Breast epithelium (tissue), 4 donors: ENCODE measurements at regions of chr3 and their contacts with region 1.

Region 1: DNA sequence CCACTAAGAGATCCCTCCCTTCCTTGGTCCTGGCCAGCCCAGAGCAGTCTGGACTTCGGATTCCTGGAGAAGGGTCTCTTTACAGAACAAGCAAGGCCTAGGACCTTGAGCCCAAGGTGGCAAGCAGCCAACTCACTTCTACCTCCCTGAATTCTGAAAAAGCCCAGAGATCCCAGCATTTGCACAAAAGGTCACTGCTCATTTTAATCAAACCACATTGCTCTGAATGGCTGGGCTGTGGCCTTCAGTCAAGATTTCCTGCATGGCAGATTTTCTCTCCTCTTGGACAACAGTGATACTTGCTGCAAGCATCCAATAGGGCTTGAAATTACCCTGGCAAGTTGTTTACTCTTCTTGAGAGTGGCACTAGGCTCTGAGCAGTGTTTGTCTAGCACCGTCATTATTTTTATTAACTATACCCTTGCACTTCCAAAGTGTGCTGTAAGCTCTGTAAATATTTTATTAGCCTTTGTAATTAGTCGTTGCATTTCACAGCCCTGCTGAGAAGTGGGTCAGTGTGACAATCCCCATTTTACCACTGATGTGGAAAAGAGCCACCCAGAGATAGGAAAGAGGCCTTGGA is 274.7 kb upstream of the CTNNB1 start:
- DNase-seq: no peak
- H3K4me3 ChIP-seq: no peak overlapping the region
- H3K27ac ChIP-seq: no peak overlapping the region
- H3K4me1 ChIP-seq: no peaks in the 10 kb centered on the region
- H3K27me3 ChIP-seq: no peaks in the 10 kb centered on the region
- CTCF ChIP-seq: no peak
- POLR2A ChIP-seq: no peak

Region 2: DNA sequence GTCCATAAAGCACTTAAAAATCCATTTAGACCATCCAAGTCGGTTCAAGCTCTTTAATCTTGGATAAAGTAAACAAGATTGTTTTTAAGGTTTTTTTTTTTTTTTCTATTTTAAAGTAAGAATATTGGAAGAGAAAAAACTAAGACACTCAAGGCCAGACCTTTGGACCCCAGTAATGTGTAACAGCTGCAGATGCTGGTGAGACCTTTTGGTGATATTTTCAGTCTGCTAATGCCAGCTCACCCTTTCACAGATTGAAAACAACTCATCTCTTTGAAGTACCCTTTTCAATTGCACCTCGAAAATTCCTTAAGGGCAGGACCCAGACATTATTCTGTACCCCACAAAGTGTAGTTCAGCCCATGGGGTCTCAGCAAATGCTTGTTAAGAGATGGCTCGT is 13.9 kb after region 1 on chr3:
- intact Hi-C with region 1: loop called (anchors 1 kb)
- DNase-seq: no peak
- H3K4me3 ChIP-seq: no peak overlapping the region
- H3K27ac ChIP-seq: peak overlapping the region; percentile 69 to 80
- H3K4me1 ChIP-seq: no peaks in the 10 kb centered on the region
- H3K27me3 ChIP-seq: no peaks in the 10 kb centered on the region
- CTCF ChIP-seq: no peak
- POLR2A ChIP-seq: no peak

Region 3: DNA sequence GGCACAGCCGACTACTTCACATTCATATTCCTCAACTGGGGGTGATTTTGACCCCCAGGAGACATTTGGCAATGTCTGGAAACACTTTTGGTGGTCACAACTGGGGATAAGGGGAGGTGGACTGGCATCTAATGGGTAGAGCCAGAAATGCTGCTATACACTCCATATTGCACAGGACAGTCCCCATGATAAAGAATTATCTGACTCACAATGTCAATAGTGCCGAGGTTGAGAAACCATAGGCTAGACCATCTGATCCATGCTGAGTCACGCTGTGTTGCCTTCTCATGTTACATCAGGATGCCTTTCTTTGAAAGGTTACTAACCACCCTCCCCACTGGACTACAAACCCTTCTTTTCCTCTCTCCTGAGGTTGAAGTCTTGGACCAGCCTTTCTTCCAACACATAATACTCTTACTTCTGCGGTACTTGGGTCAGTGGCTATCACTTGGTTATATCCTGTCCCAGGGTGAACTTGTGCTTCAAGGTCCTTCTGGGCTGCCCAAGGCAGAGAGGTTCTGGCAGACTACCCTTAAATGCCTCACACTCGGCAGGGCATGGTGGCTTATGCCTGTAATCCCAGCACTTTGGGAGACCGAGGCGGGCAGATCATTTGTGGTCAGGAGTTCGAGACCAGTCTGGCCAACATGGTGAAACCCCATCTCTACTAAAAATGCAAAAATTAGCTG is 343.5 kb after region 1 on chr3:
- intact Hi-C with region 1: no loop called
- DNase-seq: no peak
- H3K4me3 ChIP-seq: no peak overlapping the region
- H3K27ac ChIP-seq: no peak overlapping the region
- H3K4me1 ChIP-seq: no peaks in the 10 kb centered on the region
- H3K27me3 ChIP-seq: no peaks in the 10 kb centered on the region
- CTCF ChIP-seq: no peak
- POLR2A ChIP-seq: no peak